Endothelial cell of umbilical vein (primary cell): ENCODE measurements at regions of chr1 and their contacts with region 1.

Region 1: GRCh38 chr1:97082160-97082848 is 360.7 kb downstream of the PTBP2 start:
- DNase-seq: no peak
- H3K4me3 ChIP-seq: no peak overlapping the region
- H3K27ac ChIP-seq: no peak overlapping the region
- H3K4me1 ChIP-seq: no peaks in the 10 kb centered on the region
- H3K27me3 ChIP-seq: no peaks in the 10 kb centered on the region
- CTCF ChIP-seq: no peak
- POLR2A ChIP-seq: no peak

Region 2: DNA sequence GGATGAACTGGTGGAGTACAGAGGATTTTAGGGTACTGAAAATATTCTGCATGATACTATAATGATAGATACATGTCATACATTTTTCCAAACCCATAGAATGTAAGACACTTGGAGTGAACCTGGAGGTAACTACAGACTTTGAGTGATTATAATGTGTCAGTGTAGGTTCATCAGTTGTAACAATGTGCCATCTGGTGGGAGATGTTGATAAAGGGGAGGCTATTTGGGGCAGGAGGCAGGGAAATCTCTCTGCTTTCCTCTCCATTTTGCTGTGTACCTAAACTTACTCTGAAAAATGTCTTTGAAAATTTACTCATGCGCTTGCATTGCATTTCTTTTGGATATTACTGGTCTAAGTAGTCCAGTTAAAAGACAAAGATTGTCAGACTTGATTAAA is 325.5 kb before region 1 on chr1:
- CTCF ChIA-PET with region 1: no interaction called
- POLR2A ChIA-PET with region 1: no interaction called
- dilution Hi-C with region 1: no loop called
- intact Hi-C with region 1: no loop called
- DNase-seq: no peak
- H3K4me3 ChIP-seq: no peak overlapping the region
- H3K27ac ChIP-seq: no peak overlapping the region
- H3K4me1 ChIP-seq: no peaks in the 10 kb centered on the region
- H3K27me3 ChIP-seq: no peaks in the 10 kb centered on the region
- CTCF ChIP-seq: no peak
- POLR2A ChIP-seq: no peak

Region 3: DNA sequence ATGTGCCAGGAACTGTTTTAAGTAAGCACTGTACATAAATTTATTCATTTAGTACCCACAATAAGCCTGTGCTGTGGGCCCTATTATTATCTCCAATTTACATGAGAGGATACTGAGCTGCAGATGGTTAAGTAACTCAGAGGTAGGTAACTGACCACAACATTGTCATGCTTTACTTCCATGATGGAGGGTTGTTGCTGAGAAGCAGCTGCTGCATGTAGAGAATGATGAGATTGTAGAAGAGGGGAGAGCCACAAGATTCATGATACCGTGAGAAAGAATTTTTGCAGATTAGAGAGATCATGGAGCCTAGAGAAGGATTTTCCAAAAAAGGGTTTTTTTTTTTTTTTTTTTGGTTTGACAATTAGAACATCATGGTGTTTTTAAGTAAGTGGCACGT is 47.7 kb before region 1 on chr1:
- CTCF ChIA-PET with region 1: no interaction called
- POLR2A ChIA-PET with region 1: no interaction called
- dilution Hi-C with region 1: no loop called
- intact Hi-C with region 1: loop called (anchors 1 kb)
- DNase-seq: no peak
- H3K4me3 ChIP-seq: no peak overlapping the region
- H3K27ac ChIP-seq: no peak overlapping the region
- H3K4me1 ChIP-seq: no peaks in the 10 kb centered on the region
- H3K27me3 ChIP-seq: no peaks in the 10 kb centered on the region
- CTCF ChIP-seq: no peak
- POLR2A ChIP-seq: no peak